HepG2 (cell line): ENCODE measurements at regions of chr3 and their contacts with region 1.

Region 1: DNA sequence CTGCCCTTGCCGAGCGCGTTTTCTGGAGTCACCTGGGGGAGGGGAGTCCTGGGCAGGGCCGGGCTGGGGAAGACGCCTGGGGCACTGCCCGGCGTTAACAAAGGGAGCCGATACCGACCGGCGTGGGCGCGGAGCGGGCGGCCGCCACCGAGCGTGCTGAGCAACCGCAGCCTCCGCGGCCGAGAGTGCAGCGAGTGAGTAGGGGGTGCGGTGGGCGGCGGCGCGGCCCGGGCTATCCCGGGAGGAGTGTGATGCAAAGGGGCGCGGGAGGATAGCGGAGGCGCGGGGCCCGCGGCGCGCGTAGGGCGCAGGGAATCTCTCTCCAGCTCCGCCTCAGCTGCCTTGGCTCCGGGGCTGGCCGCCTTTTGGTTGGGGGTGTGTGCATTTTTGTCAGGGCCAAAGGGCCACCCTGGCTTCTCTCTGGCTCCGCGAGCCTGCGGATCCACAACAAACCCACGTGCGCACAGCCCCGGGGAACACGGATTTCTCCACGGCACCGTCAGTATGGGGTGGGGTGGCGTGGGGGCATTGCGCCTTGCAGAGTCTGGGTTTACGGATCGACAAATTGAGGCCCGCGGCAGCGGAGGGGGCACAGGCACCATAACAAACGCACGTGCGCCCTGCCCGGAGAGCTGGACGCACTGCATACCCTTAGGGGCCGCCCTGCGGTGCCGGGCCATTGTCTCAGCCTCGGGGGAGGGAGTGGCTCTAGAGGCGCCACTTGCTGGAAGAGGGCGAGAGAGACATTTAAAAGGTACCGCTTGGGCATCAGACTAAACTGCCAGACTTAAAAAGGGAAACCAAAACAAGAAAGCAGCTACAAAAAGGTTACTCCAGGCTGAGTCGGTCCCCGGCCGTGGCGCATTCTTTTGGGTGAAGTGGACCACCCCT is 560 bp downstream of the ST6GAL1 start:
- DNase-seq: peak; percentile 71
- ATAC-seq: peak; percentile 84
- H3K4me3 ChIP-seq: peak overlapping the region; percentile 68 to 81 (median 71)
- H3K27ac ChIP-seq: peak overlapping the region; percentile 45
- H3K4me1 ChIP-seq: peaks cover 25% of the 10 kb centered on the region
- H3K27me3 ChIP-seq: peaks cover 0 to 12% of the 10 kb centered on the region in 2 experiments; a peak in 3 of 5 replicates
- CTCF ChIP-seq: peak; percentile 53
- EP300 ChIP-seq: no peak
- POLR2A ChIP-seq: 0 out of 4 replicates have a peak, but pooled peaks of 1 of the 2 experiments have one; percentile 34
- RAD21 ChIP-seq: no peak; the same call in 1 of the 2 replicates

Region 2: GRCh38 chr3:186909078-186909853 is 21.6 kb before region 1 on chr3:
- CTCF ChIA-PET with region 1: no interaction called
- POLR2A ChIA-PET with region 1: interaction called, 19 read pairs
- in situ Hi-C with region 1: no loop called
- intact Hi-C with region 1: no loop called
- DNase-seq: peak; percentile 37
- ATAC-seq: peak; percentile 31; the same call in 2 of the 3 replicates
- H3K4me3 ChIP-seq: no peak overlapping the region
- H3K27ac ChIP-seq: no peak overlapping the region
- H3K4me1 ChIP-seq: peaks cover 42% of the 10 kb centered on the region
- H3K27me3 ChIP-seq: no peaks in the 10 kb centered on the region
- CTCF ChIP-seq: no peak
- EP300 ChIP-seq: no peak
- POLR2A ChIP-seq: no peak
- RAD21 ChIP-seq: no peak

Region 3: GRCh38 chr3:186976837-186977750 is 46.2 kb after region 1 on chr3:
- CTCF ChIA-PET with region 1: no interaction called
- POLR2A ChIA-PET with region 1: interaction called, 5 read pairs
- in situ Hi-C with region 1: no loop called
- intact Hi-C with region 1: loop called (anchors 2 kb)
- DNase-seq: no peak
- ATAC-seq: no peak
- H3K4me3 ChIP-seq: no peak overlapping the region
- H3K27ac ChIP-seq: no peak overlapping the region
- H3K4me1 ChIP-seq: peaks cover 77% of the 10 kb centered on the region
- H3K27me3 ChIP-seq: no peaks in the 10 kb centered on the region
- CTCF ChIP-seq: no peak
- EP300 ChIP-seq: no peak
- POLR2A ChIP-seq: no peak
- RAD21 ChIP-seq: no peak

Region 4: DNA sequence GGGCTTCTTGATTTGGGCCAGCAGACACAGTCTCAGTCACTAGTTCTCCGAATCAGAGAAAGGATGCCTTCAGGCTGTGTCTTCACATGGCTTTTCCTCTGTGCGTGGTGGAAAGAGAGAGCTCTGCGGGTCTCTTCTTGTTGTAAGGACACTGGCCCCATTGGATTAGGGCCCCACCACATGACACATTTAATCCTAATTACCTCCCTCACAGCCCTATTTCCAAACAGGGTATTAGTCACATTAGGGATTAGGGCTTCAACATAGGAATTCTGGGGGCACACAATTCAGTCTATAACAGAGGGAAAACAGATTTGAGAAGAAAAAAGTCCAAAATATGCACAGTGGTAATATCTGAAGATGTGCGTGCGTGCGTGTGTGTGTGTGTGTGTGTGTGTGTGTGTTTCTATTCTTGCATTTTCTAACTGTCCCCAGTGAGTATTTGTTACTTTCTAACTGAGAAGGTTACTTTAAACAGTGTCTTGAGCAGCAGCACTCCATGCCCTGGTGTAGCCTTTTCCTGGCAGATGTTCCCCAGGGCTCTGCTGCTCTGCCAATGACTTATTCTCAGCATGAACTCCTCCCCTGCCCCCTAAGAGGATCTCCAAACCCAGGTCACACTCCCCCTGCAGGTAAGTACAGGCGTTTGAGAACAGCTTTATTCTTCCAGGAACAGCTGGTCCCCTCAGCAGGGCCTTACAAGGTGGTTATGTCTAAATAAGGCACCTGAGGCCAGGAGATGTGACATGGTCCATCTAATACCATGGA is 135.5 kb after region 1 on chr3:
- CTCF ChIA-PET with region 1: no interaction called
- POLR2A ChIA-PET with region 1: no interaction called
- in situ Hi-C with region 1: loop called (anchors 10 kb)
- intact Hi-C with region 1: loop called (anchors 5 kb)
- DNase-seq: peak; percentile 65
- ATAC-seq: peak; percentile 73
- H3K4me3 ChIP-seq: no peak overlapping the region
- H3K27ac ChIP-seq: no peak overlapping the region
- H3K4me1 ChIP-seq: peaks cover 66% of the 10 kb centered on the region
- H3K27me3 ChIP-seq: no peaks in the 10 kb centered on the region
- CTCF ChIP-seq: peak; percentile 45
- EP300 ChIP-seq: no peak
- POLR2A ChIP-seq: no peak
- RAD21 ChIP-seq: peak; percentile 48; the same call in 1 of the 2 replicates